ENCODE measurements at regions of chr4 and their contacts with region 1.

Region 1: GRCh38 chr4:21184788-21185187 is 484.5 kb downstream of the PACRGL start:
- DNase-seq: peak; percentile 34
- H3K4me3 Mint-ChIP-seq: no peak overlapping the region
- H3K27ac Mint-ChIP-seq: no peak overlapping the region
- H3K4me1 Mint-ChIP-seq: peaks cover 24% of the 10 kb centered on the region
- H3K27me3 Mint-ChIP-seq: no peaks in the 10 kb centered on the region
- CTCF ChIP-seq: peak; percentile 40

Region 2: GRCh38 chr4:21195682-21196081 is 10.9 kb after region 1 on chr4:
- CTCF ChIA-PET with region 1: interaction called, 13 read pairs
- POLR2A ChIA-PET with region 1: interaction called, 14 read pairs
- intact Hi-C with region 1: no loop called
- DNase-seq: peak; percentile 93
- H3K4me3 Mint-ChIP-seq: no peak overlapping the region
- H3K27ac Mint-ChIP-seq: no peak overlapping the region
- H3K4me1 Mint-ChIP-seq: peaks cover 17% of the 10 kb centered on the region
- H3K27me3 Mint-ChIP-seq: no peaks in the 10 kb centered on the region
- CTCF ChIP-seq: no peak

Region 3: DNA sequence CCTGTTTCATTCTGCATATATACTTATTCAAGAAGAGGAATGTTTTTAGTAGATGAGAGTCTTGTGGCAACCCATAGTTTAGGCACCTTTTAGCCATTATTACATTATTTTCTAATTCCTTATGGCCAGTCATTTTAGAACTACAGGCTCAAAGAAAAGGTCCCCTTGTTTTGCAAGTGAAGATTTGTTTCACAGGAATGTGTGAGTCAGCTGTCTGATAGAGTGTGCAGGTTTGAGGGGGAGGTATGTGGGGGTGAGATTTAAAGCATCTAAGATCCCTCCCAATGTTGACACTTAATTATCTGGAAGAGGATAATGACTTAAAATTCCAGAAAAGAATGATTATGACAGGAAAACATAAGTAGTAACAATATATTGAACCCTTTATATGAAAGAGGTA is 268.1 kb after region 1 on chr4:
- CTCF ChIA-PET with region 1: interaction called, 23 read pairs
- POLR2A ChIA-PET with region 1: interaction called, 3 read pairs
- intact Hi-C with region 1: no loop called
- DNase-seq: no peak
- H3K4me3 Mint-ChIP-seq: no peak overlapping the region
- H3K27ac Mint-ChIP-seq: no peak overlapping the region
- H3K4me1 Mint-ChIP-seq: peaks cover 24% of the 10 kb centered on the region
- H3K27me3 Mint-ChIP-seq: no peaks in the 10 kb centered on the region
- CTCF ChIP-seq: no peak

Region 4: GRCh38 chr4:21512353-21512752 is 327.6 kb after region 1 on chr4:
- CTCF ChIA-PET with region 1: interaction called, 12 read pairs
- POLR2A ChIA-PET with region 1: no interaction called
- intact Hi-C with region 1: no loop called
- DNase-seq: peak; percentile 55
- H3K4me3 Mint-ChIP-seq: no peak overlapping the region
- H3K27ac Mint-ChIP-seq: no peak overlapping the region
- H3K4me1 Mint-ChIP-seq: peaks cover 5% of the 10 kb centered on the region
- H3K27me3 Mint-ChIP-seq: peaks cover 54% of the 10 kb centered on the region
- CTCF ChIP-seq: peak; percentile 62

Region 5: GRCh38 chr4:21765810-21766407 is 581.1 kb after region 1 on chr4:
- CTCF ChIA-PET with region 1: interaction called, 8 read pairs
- POLR2A ChIA-PET with region 1: no interaction called
- intact Hi-C with region 1: loop called (anchors 10 kb)
- DNase-seq: peak; percentile 73
- H3K4me3 Mint-ChIP-seq: no peak overlapping the region
- H3K27ac Mint-ChIP-seq: no peak overlapping the region
- H3K4me1 Mint-ChIP-seq: peaks cover 6% of the 10 kb centered on the region
- H3K27me3 Mint-ChIP-seq: peaks cover 13% of the 10 kb centered on the region
- CTCF ChIP-seq: peak; percentile 76

Measured in MCF 10A (cell line).